Activated CD4-positive, alpha-beta memory T cell treated with anti-CD3 and anti-CD28 coated beads for 36 hours (primary cell): ENCODE measurements at regions of chr15 and their contacts with region 1.

Region 1: DNA sequence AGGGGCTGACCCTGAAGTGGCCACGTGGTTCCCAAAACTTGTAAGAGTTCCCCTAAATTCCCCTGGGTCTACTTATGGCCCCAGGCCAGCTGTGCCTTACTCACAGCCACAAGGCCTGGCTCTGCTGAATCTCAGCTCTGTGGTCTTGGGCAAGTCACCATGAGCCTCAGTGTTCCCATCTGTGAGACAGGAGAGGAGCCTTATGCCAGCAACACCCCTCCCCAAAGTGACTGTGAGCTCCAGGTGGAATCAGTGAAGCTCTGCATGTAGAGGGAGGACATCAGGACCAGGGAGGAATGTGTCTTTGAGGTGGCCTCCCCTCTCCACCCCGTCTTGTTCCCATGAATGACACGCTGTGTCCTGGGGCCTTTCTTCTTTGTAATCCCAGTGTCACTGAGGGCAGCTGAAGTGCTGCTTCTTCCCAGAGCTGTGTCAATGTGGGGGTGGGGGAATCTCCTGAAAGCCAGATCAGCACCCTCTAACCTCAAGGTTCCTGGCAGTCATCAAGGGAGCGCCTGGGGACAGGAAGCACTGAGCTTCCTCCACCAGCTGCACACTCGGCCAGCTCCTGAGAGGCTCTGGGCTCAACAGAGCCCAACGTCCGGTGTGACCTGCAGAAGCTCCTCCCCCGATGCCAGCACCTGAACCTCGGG is 258.9 kb downstream of the UACA start:
- DNase-seq: peak; percentile 81
- H3K4me3 Mint-ChIP-seq: peak overlapping the region; percentile 17
- H3K27ac Mint-ChIP-seq: peak overlapping the region; percentile 79
- H3K4me1 Mint-ChIP-seq: peaks cover 71% of the 10 kb centered on the region
- H3K27me3 Mint-ChIP-seq: peaks cover 2% of the 10 kb centered on the region

Region 2: DNA sequence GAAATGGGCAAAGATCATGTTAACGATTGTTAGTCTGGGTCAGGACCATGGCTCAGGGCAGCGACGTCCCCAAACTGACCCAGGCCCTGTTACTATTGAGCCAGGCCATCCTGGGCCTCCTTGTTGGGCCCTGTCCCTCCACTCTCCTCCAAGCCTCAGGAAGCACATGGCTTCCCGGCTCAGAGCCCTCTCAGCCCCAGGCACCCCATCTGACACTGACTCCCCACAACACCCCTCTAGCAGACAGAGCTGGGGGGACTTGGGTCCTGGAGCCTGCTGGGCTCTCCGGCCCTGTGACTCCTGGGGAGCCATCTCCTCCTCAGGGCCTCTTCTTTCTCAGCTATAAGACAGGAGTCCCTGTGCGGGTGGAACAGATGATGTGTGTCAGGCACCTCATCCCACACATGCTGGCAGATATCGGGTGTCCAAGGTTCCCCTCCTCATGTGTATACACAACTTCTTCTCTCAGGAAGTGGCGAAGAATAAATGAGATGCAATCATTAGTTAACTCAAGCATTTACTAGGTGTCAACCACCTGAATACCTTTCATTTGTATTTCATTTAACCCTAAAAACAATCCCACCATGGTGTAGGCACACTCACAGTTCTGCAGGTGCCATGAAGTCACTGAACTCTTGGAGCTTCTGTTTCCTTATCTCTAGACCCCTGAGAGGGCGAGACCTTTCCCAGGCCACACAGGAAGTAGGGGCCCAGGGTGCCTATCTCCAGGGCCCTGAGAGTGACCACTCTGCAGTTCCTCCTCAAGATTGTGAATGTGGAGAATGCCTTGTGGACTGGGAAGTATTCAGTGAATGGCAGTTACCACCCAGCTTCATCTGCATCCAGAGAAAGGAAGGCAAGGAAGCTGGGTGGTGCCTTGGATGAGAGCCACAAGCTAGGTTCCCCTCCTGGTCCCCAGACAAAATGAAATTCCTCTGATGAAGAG is 124.2 kb before region 1 on chr15:
- CTCF ChIA-PET with region 1: no interaction called
- POLR2A ChIA-PET with region 1: no interaction called
- intact Hi-C with region 1: no loop called
- DNase-seq: no peak
- H3K4me3 Mint-ChIP-seq: no peak overlapping the region
- H3K27ac Mint-ChIP-seq: no peak overlapping the region
- H3K4me1 Mint-ChIP-seq: no peaks in the 10 kb centered on the region
- H3K27me3 Mint-ChIP-seq: peaks cover 7% of the 10 kb centered on the region

Region 3: GRCh38 chr15:70415398-70415797 is 89.0 kb before region 1 on chr15:
- CTCF ChIA-PET with region 1: no interaction called
- POLR2A ChIA-PET with region 1: no interaction called
- intact Hi-C with region 1: no loop called
- DNase-seq: no peak
- H3K4me3 Mint-ChIP-seq: no peak overlapping the region
- H3K27ac Mint-ChIP-seq: no peak overlapping the region
- H3K4me1 Mint-ChIP-seq: no peaks in the 10 kb centered on the region
- H3K27me3 Mint-ChIP-seq: peaks cover 3% of the 10 kb centered on the region

Region 4: DNA sequence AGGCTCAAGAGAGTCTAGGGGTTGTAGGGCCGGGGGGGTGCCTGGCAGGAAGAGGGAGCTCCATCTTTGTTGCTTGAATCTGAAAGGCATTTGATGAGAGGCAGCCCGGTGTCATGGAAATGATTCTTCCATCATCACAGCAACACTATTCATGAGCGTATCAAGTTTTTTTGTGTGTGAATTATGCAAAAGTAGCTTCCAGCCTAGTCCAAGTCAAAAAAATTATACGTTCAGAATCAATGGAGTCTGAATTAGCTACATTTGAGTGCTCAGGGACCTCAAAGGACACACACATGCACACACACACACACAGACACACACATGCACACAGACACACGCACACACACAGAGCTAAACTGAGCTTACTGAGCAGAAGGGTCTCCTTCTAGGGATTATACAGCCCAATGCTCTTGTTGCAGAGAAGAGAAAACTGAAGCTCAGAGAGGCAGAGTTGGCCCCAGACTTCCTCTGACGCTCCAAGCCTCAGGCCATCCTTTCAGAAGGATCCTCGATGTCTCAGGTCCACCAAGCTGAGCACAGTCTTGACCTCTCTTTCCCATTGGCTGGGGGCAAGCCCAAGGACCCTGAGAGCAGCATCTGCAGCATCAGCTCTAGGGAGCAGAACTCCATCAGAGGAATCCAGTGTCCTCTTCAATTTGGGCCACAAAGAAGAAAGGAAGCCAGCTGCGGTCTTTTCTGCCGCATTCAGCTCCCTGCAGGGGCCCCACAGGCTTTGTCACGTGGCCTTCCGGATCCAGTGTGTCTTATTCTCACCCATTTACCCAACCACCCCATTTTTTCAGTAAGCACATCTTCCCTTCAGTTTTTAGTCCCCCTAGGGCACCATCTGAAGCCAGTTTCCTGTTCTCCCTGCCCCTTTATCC is 30.9 kb after region 1 on chr15:
- CTCF ChIA-PET with region 1: interaction called, 5 read pairs
- POLR2A ChIA-PET with region 1: interaction called, 3 read pairs
- intact Hi-C with region 1: loop called (anchors 2 kb)
- DNase-seq: peak; percentile 80
- H3K4me3 Mint-ChIP-seq: peak overlapping the region; percentile 78
- H3K27ac Mint-ChIP-seq: peak overlapping the region; percentile 85
- H3K4me1 Mint-ChIP-seq: peaks cover 48% of the 10 kb centered on the region
- H3K27me3 Mint-ChIP-seq: no peaks in the 10 kb centered on the region